Naive thymus-derived CD8-positive, alpha-beta T cell (primary cell): ENCODE measurements at regions of chr3 and their contacts with region 1.

Region 1: DNA sequence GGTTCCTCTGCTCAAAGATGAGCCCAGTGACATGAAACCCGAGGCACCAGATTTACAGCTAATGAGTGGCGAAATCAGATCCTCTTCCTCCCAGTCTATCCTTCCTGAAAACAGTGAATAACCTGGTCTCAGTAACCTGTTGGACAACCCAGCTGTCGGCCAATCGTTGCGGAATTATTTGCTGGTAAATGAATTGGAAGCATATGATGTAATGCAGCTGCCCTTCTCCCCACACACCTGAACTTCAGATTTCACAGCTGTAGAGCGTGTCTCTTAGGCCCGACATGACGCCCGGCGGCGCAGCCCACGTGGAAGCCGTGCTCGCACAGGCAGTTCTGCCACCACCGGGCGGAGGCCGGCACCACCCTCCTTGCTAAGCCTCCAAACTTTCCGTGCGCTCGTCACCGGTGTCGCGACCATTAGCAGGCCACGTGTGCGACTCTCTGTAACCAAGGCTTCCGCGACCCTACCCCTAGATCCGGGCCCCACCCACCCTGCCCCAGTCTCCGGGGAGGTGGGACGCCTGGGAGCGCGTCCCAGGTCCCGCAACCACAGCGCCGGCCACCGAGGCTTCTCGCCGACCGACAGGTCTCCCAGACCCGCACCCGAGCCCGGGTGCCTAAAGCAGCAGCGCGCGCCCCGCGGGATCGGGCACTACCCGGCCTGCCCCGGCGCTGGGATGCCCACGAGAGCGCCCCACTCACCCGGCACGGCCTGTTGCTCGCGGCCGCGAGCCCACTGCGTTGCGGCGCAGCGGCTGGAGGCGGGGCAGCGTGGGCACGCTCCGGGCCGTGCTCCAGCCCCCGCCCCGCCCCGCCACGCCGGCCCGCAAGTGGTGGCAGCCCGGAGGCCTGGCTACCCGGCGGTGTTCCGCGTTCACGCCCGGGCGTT is at the start of gene RIOX2:
- DNase-seq: peak; percentile 59 to 87 (median 73)
- ATAC-seq: peak; percentile 90 to 94
- H3K4me3 Mint-ChIP-seq: peak within 1 kb of the TSS; percentile 84 to 95 (median 92)
- H3K27ac Mint-ChIP-seq: peak within 1 kb of the TSS; percentile 81 to 97 (median 94)
- H3K4me1 Mint-ChIP-seq: peaks cover 27 to 67% (median 59%) of the 10 kb centered on the region in 4 donors
- H3K27me3 Mint-ChIP-seq: no peaks in the 10 kb centered on the region
- polyA plus RNA-seq, gene RIOX2: 26.9 to 32.4 (median 29.0) TPM

Region 2: GRCh38 chr3:97821810-97822775 is 149.8 kb before region 1 on chr3 and contains the start of gene CRYBG3:
- POLR2A ChIA-PET with region 1: interaction called, 10 read pairs
- DNase-seq: peak; percentile 65 to 83 (median 76)
- ATAC-seq: peak; percentile 96 to 97
- H3K4me3 Mint-ChIP-seq: peak within 1 kb of the TSS; percentile 87 to 96 (median 94)
- H3K27ac Mint-ChIP-seq: peak within 1 kb of the TSS; percentile 62 to 93 (median 82)
- H3K4me1 Mint-ChIP-seq: peaks cover 10 to 24% (median 20%) of the 10 kb centered on the region in 4 donors
- H3K27me3 Mint-ChIP-seq: peaks cover 4 to 13% (median 8%) of the 10 kb centered on the region in 5 donors
- polyA plus RNA-seq, gene CRYBG3: 0.15 to 0.90 (median 0.48) TPM

Region 3: DNA sequence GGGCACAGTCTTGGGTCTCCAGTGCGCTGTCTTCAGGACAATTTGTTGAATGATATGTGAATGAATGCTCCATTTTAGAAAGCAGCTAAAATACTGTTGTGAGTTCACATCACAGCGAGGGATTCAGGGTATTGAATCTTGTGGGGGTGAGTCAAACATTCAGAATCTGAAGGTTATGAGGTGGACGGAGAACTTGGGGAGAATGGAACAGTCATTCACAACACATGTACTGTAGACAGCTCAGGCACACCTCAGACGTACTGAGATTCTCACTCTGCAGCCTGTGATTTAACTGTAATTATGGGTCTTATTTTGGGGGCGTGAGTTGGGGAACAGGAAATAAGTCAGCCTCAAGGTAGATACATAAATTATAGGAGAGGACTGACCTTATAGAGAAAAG is 136.2 kb before region 1 on chr3:
- POLR2A ChIA-PET with region 1: no interaction called
- DNase-seq: no peak
- ATAC-seq: no peak
- H3K4me3 Mint-ChIP-seq: no peak overlapping the region
- H3K27ac Mint-ChIP-seq: no peak overlapping the region
- H3K4me1 Mint-ChIP-seq: no peaks in the 10 kb centered on the region
- H3K27me3 Mint-ChIP-seq: no peaks in the 10 kb centered on the region